ENCODE measurements at regions of chr15 and their contacts with region 1.

Region 1: GRCh38 chr15:45486317-45486716 is 36.2 kb downstream of the SLC30A4 start:
- DNase-seq: no peak
- H3K4me3 ChIP-seq: no peak overlapping the region
- H3K27ac ChIP-seq: no peak overlapping the region
- H3K4me1 ChIP-seq: no peaks in the 10 kb centered on the region
- H3K27me3 ChIP-seq: no peaks in the 10 kb centered on the region
- CTCF ChIP-seq: no peak
- EP300 ChIP-seq: no peak
- POLR2A ChIP-seq: no peak

Region 2: DNA sequence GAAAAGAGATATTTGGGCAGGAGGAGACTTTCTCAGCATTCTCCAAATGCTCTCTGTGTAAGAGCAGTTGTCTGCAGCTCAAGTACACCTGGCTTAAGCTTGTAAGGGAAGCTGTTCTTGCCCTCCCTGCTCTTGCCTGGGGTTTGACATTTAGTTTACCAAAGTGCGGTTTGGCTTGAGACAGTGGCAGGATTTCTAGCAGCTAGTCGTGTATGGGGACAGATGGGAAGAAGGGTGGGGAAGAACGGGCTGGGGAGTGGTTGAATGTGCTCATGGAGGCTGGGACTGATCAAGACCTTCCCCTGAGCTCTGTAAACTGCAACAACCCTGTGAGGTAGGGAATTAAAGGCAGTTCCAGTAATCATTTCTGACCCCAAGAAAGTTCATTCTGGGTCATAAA is 188.4 kb after region 1 on chr15:
- in situ Hi-C with region 1: no loop called
- intact Hi-C with region 1: no loop called
- DNase-seq: no peak
- H3K4me3 ChIP-seq: no peak overlapping the region
- H3K27ac ChIP-seq: peak overlapping the region in 2 of 4 donors; percentile 17 to 39
- H3K4me1 ChIP-seq: no peaks in the 10 kb centered on the region
- H3K27me3 ChIP-seq: no peaks in the 10 kb centered on the region
- CTCF ChIP-seq: no peak
- EP300 ChIP-seq: no peak
- POLR2A ChIP-seq: no peak

Region 3: DNA sequence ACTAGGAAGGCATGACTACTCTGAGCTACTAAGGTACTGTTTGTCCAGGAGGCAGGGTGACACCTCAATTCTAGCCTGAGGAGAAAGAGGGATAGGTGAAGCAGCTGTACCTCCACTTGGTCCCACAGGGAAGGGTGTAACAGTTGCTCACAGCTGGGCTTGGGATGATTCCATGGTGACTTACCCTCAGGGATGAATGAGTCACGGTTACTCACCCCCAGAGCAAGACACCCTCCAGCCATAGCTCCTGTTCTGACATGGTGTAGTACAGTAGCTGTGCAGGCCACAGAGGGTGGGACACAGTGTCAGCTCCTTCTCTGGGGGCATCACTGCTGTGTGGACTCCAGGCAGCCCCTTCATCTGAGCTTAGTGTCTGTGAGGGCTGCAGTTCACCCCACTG is 1362.4 kb after region 1 on chr15:
- in situ Hi-C with region 1: no loop called
- intact Hi-C with region 1: loop called (anchors 5 kb)
- DNase-seq: no peak
- H3K4me3 ChIP-seq: no peak overlapping the region
- H3K27ac ChIP-seq: no peak overlapping the region
- H3K4me1 ChIP-seq: no peaks in the 10 kb centered on the region
- H3K27me3 ChIP-seq: no peaks in the 10 kb centered on the region
- CTCF ChIP-seq: no peak
- EP300 ChIP-seq: no peak
- POLR2A ChIP-seq: no peak